ENCODE measurements at regions of chr21 and their contacts with region 1.

Region 1: GRCh38 chr21:25385911-25386474 is 221.3 kb downstream of the MRPL39 start:
- DNase-seq: no peak
- H3K4me3 Mint-ChIP-seq: no peak overlapping the region
- H3K27ac Mint-ChIP-seq: no peak overlapping the region
- H3K4me1 Mint-ChIP-seq: peaks cover 9% of the 10 kb centered on the region
- H3K27me3 Mint-ChIP-seq: peaks cover 4% of the 10 kb centered on the region

Region 2: DNA sequence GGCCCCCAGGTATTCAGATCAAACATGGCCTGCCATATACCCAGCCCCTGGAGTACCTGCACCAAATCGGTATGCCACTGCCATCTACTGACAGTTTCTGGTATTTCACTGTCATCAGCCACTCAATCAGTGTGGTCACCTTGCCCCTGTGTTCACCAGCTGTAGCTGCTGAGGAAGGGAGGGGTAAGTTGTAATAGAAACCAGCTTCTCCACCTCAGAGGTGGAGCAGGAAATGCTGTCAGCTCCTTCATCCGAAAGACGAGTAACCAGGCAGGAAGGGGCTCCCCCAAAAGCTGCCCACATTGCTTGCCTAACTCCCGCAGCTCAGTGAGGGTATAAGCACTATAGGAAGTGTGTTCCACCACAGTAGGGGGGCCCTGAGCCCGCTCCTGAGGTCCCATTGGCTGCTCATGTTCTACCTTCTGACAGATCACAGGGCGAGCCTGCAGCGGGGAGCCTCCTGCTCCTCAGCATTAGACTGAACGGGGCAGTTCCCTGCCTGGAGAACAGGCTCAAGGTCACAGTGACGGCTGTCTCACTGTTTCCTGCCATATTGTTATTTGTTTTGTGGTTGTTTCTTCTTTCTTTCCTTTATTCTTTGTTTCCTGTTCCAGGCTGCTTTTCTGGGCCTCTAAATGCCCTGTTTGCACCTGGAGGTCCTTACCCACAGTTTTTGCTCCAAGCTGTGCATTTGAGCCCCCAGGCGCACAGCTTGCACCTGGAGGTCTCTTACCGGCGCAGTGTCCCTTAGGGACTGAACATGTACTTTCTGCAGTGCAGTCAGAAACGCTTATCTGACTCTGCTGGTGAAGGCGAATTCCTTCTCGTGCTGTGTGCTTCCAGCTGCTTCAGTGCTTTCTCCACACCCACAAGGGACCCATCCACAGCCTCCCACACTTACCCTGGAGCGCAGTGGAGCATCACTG is 1417.0 kb before region 1 on chr21:
- intact Hi-C with region 1: loop called (anchors 10 kb)
- DNase-seq: peak; percentile 81
- H3K4me3 Mint-ChIP-seq: peak overlapping the region; percentile 56
- H3K27ac Mint-ChIP-seq: peak overlapping the region; percentile 80
- H3K4me1 Mint-ChIP-seq: peaks cover 27% of the 10 kb centered on the region
- H3K27me3 Mint-ChIP-seq: peaks cover 4% of the 10 kb centered on the region

Region 3: GRCh38 chr21:24514081-24514733 is 871.8 kb before region 1 on chr21:
- intact Hi-C with region 1: loop called (anchors 5 kb)
- DNase-seq: no peak
- H3K4me3 Mint-ChIP-seq: no peak overlapping the region
- H3K27ac Mint-ChIP-seq: no peak overlapping the region
- H3K4me1 Mint-ChIP-seq: no peaks in the 10 kb centered on the region
- H3K27me3 Mint-ChIP-seq: no peaks in the 10 kb centered on the region

Region 4: GRCh38 chr21:24895885-24896734 is 489.9 kb before region 1 on chr21:
- intact Hi-C with region 1: loop called (anchors 2 kb)
- DNase-seq: no peak
- H3K4me3 Mint-ChIP-seq: no peak overlapping the region
- H3K27ac Mint-ChIP-seq: no peak overlapping the region
- H3K4me1 Mint-ChIP-seq: no peaks in the 10 kb centered on the region
- H3K27me3 Mint-ChIP-seq: no peaks in the 10 kb centered on the region

Region 5: DNA sequence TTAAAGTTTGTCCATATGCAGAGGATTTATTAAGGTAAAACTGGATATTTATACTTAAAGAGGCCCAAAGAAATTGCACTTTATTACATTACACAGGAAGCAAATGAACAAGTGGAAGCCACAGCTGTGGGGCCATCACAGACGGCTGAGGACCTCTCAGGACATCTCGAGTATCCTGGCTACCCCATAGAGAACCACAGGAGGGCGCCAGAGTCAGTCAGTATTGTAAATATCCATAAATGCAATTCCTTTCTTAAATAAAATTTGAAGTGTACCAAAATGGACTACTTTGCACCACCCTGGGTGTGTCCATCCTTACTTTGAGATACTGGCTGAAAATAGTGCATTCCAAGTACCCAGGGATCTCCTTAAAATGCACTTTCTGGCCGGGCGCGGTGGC is 35.9 kb before region 1 on chr21:
- intact Hi-C with region 1: loop called (anchors 1 kb)
- DNase-seq: no peak
- H3K4me3 Mint-ChIP-seq: no peak overlapping the region
- H3K27ac Mint-ChIP-seq: no peak overlapping the region
- H3K4me1 Mint-ChIP-seq: no peaks in the 10 kb centered on the region
- H3K27me3 Mint-ChIP-seq: peaks cover 5% of the 10 kb centered on the region

Region 6: GRCh38 chr21:25360593-25360992 is 25.4 kb before region 1 on chr21:
- intact Hi-C with region 1: no loop called
- DNase-seq: no peak
- H3K4me3 Mint-ChIP-seq: no peak overlapping the region
- H3K27ac Mint-ChIP-seq: no peak overlapping the region
- H3K4me1 Mint-ChIP-seq: peaks cover 14% of the 10 kb centered on the region
- H3K27me3 Mint-ChIP-seq: no peaks in the 10 kb centered on the region

Measured in activated T-helper 1 cell treated with anti-CD3 and anti-CD28 coated beads, Interleukin-12 subunit alpha, Interleukin-12 subunit beta, Interleukin-2, Interleukin-4 antibody, amounts not matched to agents 30 ng/mL and 10 ng/mL and 1 ng/mL, durations not matched to agents 14 hours and 24 hours and 36 hours (primary cell).